ENCODE measurements at regions of chr2 and their contacts with region 1.

Region 1: DNA sequence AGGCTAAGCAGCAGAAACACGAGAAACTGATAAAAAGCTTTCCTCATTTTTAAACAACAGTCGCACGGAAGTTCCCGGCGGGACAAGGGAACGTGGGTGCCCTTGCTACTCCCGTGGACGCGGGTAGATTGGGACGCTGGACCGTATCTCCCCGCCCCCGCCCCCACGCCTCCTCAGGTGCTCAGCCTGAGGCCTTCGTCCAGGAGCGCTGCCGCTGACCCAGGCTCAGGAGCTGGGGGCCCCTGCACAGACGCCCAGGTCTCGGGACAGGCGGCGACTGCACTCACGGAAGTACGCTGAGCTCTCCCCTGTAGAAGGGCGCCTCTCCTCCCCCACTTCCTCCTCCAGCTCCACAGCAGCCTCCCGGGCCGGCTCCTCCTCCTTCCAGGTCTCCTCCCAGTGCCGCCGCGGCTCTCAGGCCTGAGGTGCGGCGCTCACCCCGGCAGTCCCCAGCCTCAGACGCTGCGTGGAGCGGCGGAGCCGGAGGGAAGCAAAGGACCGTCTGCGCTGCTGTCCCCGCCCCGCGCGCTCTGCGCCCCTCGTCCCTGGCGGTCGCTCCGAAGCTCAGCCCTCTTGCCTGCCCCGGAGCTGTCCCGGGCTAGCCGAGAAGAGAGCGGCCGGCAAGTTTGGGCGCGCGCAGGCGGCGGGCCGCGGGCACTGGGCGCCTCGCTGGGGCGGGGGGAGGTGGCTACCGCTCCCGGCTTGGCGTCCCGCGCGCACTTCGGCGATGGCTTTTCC is at the start of gene ITGAV:
- DNase-seq: peak; percentile 89
- ATAC-seq: peak; percentile 97
- H3K4me3 Mint-ChIP-seq: peak within 1 kb of the TSS; percentile 79
- H3K27ac Mint-ChIP-seq: peak within 1 kb of the TSS; percentile 82
- H3K4me1 Mint-ChIP-seq: peaks cover 23% of the 10 kb centered on the region
- H3K27me3 Mint-ChIP-seq: peaks cover 10% of the 10 kb centered on the region
- total RNA-seq, gene ITGAV: 4.9 to 5.6 TPM

Region 2: DNA sequence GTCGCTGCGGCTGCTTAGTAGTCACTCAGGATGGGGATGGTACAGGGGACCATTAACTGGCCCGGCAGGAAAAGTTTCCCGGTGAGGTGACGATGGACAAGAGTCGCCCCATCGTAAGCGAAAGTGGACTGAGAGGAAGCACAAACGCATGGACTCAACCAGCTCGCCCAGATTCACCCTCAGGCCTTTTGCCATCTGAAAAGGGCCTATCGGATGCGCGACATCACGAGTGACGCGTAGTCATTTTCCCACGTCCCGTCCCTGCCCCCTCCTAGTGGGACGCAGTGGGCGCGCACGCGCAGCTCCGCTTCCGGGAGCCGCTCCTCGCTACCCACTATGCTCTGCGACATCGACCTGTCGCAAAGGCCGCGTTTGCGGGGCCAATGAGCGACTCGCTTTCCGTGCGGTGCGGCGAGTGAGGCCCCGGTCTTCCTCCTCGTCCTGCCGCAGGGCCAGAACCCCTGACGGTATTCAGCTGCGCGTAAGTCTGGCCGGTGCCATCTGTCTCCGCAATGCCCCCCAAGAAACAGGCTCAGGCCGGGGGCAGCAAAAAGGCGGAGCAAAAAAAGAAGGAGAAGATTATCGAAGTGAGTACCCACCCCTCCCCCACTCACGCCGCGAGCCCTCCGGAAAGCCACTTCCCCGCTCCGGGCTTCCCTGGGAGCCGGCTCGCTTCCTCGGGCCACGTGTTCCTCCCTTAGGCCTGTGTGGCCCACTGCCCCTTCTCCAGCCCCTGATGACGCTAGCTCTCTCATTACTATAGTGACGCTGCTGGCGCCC is 103.7 kb before region 1 on chr2 and contains the start of gene ZC3H15:
- CTCF ChIA-PET with region 1: no interaction called
- POLR2A ChIA-PET with region 1: interaction called, 13 read pairs
- DNase-seq: peak; percentile 97
- ATAC-seq: peak; percentile 92
- H3K4me3 Mint-ChIP-seq: peak within 1 kb of the TSS; percentile 98
- H3K27ac Mint-ChIP-seq: peak within 1 kb of the TSS; percentile 96
- H3K4me1 Mint-ChIP-seq: peaks cover 54% of the 10 kb centered on the region
- H3K27me3 Mint-ChIP-seq: no peaks in the 10 kb centered on the region
- total RNA-seq, gene ZC3H15: 68.1 to 73.7 TPM

Region 3: DNA sequence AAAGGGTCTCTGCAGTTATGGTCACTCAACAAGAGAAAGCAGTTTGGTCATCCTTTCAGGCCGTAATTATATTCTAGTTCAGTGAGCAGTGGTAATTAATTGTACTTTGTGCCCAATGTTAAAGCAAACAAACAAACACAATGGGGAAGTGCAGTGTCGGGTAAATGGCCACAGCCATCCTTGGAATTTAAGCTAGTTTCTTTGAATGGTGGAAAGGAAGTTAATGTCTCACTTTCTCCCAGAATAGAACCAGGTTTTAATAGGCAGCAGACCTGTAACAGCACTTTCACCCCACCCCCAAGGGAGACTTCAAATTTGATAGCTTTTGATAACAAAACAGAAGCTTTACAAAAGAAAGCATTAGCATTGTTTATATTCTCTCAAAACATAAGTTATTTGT is 19.9 kb before region 1 on chr2:
- CTCF ChIA-PET with region 1: no interaction called
- POLR2A ChIA-PET with region 1: no interaction called
- DNase-seq: no peak
- ATAC-seq: no peak
- H3K4me3 Mint-ChIP-seq: no peak overlapping the region
- H3K27ac Mint-ChIP-seq: no peak overlapping the region
- H3K4me1 Mint-ChIP-seq: no peaks in the 10 kb centered on the region
- H3K27me3 Mint-ChIP-seq: peaks cover 14% of the 10 kb centered on the region

Region 4: DNA sequence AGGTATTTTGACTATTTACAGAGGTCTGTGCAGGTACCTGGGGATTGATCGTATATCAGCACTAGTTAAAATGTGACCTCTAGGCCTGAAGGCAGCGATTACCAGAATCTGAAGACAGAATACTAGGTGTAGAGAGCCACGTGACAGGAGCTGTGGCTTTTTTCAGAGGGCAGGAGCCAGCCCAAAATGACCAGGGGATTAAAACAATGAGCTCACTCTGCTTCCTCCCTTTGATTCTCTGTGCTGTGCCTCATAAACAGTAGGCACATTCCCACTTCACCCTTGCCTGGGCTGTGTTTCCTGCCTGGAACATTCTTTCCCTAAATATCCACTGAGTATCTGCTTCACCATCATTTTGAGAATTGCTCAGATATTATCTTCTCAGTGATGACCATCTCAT is 15.3 kb after region 1 on chr2:
- CTCF ChIA-PET with region 1: no interaction called
- POLR2A ChIA-PET with region 1: no interaction called
- DNase-seq: no peak
- ATAC-seq: no peak
- H3K4me3 Mint-ChIP-seq: no peak overlapping the region
- H3K27ac Mint-ChIP-seq: no peak overlapping the region
- H3K4me1 Mint-ChIP-seq: no peaks in the 10 kb centered on the region
- H3K27me3 Mint-ChIP-seq: no peaks in the 10 kb centered on the region